Naive thymus-derived CD8-positive, alpha-beta T cell (primary cell): ENCODE measurements at regions of chr16 and their contacts with region 1.

Region 1: GRCh38 chr16:1366712-1367492 is 15.2 kb downstream of the GNPTG start:
- DNase-seq: no peak
- ATAC-seq: no peak
- H3K4me3 Mint-ChIP-seq: no peak overlapping the region
- H3K27ac Mint-ChIP-seq: no peak overlapping the region
- H3K4me1 Mint-ChIP-seq: peaks cover 0 to 8% (median 2%) of the 10 kb centered on the region in 4 donors
- H3K27me3 Mint-ChIP-seq: no peaks in the 10 kb centered on the region

Region 2: DNA sequence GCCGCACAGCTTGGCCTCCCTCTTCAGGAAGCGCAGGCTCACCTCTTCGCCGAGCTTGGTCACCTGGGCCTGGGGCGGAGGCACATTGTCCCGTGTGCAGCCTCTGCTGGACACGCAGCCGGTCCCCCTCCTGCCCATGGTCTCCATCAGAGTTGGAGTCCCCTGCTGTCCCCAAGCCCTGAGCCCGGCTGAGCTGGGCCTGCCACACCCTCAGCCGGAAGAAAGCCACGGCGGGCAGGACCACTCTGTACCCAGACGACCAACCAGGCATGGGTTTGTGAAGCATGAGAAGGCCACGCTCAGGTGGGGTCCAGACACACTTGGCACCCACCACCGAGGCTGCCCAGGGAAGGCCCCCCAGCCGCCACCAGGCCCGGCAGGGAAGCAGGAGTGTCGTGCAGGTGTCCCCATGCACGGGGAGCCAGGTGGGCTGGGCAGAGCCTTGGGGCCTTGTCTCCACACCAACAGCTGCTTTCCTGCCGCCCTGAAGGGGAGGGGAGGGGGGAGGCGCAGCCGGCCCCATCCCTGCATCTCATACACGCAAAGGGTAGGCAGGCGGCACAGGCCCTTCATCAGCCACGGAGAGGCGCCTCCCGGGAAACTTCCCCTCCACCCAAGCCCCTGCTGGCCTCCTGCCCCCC is 72.3 kb after region 1 on chr16:
- POLR2A ChIA-PET with region 1: no interaction called
- DNase-seq: no peak
- ATAC-seq: no peak
- H3K4me3 Mint-ChIP-seq: no peak overlapping the region
- H3K27ac Mint-ChIP-seq: no peak overlapping the region
- H3K4me1 Mint-ChIP-seq: no peaks in the 10 kb centered on the region
- H3K27me3 Mint-ChIP-seq: no peaks in the 10 kb centered on the region

Region 3: DNA sequence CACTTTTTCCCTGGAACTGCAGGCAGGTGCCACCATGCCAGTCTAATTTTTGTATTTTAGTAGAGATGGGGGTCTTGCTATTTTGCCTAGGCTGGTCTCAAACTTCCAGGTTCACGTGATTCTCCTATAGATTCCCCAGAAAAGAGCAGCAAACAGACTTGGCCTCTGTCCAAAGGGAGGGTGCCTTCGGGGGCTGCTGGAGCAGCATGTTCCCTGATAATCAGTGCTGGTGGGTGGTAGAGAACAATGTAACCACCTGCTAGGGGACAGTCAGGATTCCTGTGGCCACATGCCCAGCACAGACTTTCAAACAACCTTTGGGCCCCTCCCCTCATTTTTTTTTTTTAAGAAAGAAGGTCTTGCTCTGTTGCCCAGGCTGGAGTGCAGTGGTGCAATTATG is 1048.2 kb after region 1 on chr16:
- POLR2A ChIA-PET with region 1: interaction called, 10 read pairs
- DNase-seq: no peak
- ATAC-seq: no peak
- H3K4me3 Mint-ChIP-seq: no peak overlapping the region
- H3K27ac Mint-ChIP-seq: no peak overlapping the region
- H3K4me1 Mint-ChIP-seq: no peaks in the 10 kb centered on the region
- H3K27me3 Mint-ChIP-seq: peaks cover 0 to 21% (median 6%) of the 10 kb centered on the region in 5 donors